Stomach (tissue), 19 donors: ENCODE measurements at regions of chr13 and their contacts with region 1.

Region 1: DNA sequence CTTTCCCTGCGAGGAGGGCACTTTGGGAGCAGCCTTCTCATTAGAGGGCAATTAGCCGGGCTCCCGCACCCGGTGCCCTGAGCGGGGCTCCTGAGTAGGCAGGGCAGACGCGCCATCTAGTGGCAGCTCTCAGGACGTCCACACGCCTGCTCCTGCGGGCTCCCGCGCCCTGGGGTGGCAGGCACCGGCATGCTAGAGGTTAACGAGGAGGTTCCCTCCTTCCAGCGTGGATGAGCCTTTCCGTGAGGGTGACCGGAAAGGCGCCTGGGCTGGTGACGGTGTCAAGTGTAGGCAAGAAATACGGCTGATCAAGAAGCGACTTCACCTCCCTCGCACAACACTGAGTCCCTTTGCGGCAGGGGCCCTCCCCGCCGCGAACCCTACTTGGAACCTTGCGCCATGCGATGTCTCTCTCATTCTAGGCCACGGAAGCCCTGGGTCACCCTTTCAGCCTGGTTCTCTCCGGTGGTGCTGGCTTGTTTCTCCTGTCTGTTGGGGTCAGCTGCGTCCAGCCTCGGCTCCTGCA is 67.7 kb downstream of the ALOX5AP start:
- DNase-seq: peak; percentile 86 to 93
- H3K4me3 ChIP-seq: peak overlapping the region; percentile 35 to 41 (median 40)
- H3K27ac ChIP-seq: peak overlapping the region in 4 of 5 donors; percentile 41 to 72 (median 58)
- H3K4me1 ChIP-seq: peaks cover 7 to 31% (median 19%) of the 10 kb centered on the region in 4 donors
- H3K27me3 ChIP-seq: no peaks in the 10 kb centered on the region
- CTCF ChIP-seq: peak in 5 of 7 experiments; percentile 82 to 93 (median 85)
- EP300 ChIP-seq: no peak
- POLR2A ChIP-seq: no peak

Region 2: GRCh38 chr13:30142486-30143211 is 660.4 kb before region 1 on chr13:
- intact Hi-C with region 1: loop called (anchors 10 kb)
- DNase-seq: peak in 1 of 2 donors; percentile 56
- H3K4me3 ChIP-seq: no peak overlapping the region
- H3K27ac ChIP-seq: peak overlapping the region in 4 of 5 donors; percentile 57 to 81 (median 72)
- H3K4me1 ChIP-seq: peaks cover 12 to 22% (median 19%) of the 10 kb centered on the region in 4 donors
- H3K27me3 ChIP-seq: peaks cover 0 to 5% (median 0%) of the 10 kb centered on the region in 3 donors
- CTCF ChIP-seq: no peak
- EP300 ChIP-seq: no peak
- POLR2A ChIP-seq: no peak

Region 3: DNA sequence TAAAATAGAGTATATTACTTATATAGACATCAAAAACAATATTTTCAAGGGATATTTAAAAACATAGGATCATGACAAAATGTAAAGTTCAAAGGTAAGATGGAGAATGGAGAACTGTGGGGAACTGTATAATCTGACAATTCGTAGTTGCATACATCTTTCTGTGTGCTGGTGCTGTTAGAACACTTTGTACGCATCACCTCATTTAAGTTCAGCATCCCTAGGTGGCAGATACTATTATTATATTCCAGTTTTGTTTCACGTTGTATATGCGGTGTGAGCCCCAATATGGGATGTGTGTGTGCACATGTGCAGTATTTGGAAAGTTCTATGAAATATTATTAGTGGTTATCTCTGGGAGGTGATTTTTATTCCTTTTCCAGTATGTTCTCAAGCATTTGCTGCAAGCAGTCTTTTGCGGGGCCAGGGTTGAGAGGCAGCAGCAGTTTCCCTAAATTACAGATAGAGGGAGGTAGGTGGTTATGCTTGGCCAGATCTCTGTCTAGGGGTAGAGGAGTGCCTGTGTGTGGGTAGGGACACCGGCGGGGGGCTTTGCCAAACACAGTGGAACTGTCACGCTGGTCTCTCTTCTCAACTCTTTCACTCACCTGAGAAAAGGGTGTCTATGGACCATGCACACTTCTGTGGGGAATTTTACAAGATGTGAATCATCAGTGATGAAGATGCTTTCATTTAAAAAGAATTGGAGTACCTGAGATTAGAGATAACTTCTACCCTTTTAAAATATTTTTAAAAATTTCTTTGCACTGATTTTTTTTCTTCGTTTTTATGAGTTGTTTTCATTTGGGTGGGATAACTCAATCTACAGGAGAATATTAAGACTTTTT is 123.3 kb before region 1 on chr13:
- intact Hi-C with region 1: loop called (anchors 2 kb)
- DNase-seq: peak in 1 of 2 donors; percentile 50
- H3K4me3 ChIP-seq: no peak overlapping the region
- H3K27ac ChIP-seq: no peak overlapping the region
- H3K4me1 ChIP-seq: peaks cover 0 to 17% (median 4%) of the 10 kb centered on the region in 4 donors
- H3K27me3 ChIP-seq: no peaks in the 10 kb centered on the region
- CTCF ChIP-seq: peak in 5 of 7 experiments; percentile 17 to 54 (median 40)
- EP300 ChIP-seq: no peak
- POLR2A ChIP-seq: no peak

Region 4: GRCh38 chr13:31012655-31013024 is 209.6 kb after region 1 on chr13:
- intact Hi-C with region 1: no loop called
- DNase-seq: no peak
- H3K4me3 ChIP-seq: no peak overlapping the region
- H3K27ac ChIP-seq: no peak overlapping the region
- H3K4me1 ChIP-seq: no peaks in the 10 kb centered on the region
- H3K27me3 ChIP-seq: peaks cover 0 to 9% (median 0%) of the 10 kb centered on the region in 3 donors
- CTCF ChIP-seq: no peak
- EP300 ChIP-seq: no peak
- POLR2A ChIP-seq: no peak